AG04450 (cell line): ENCODE measurements at regions of chr21 and their contacts with region 1.

Region 1: GRCh38 chr21:37817242-37817641 is 99.0 kb downstream of the KCNJ6 start:
- DNase-seq: no peak
- H3K4me3 ChIP-seq: no peak overlapping the region
- H3K27ac ChIP-seq: no peak overlapping the region
- H3K27me3 ChIP-seq: no peaks in the 10 kb centered on the region
- CTCF ChIP-seq: no peak

Region 2: DNA sequence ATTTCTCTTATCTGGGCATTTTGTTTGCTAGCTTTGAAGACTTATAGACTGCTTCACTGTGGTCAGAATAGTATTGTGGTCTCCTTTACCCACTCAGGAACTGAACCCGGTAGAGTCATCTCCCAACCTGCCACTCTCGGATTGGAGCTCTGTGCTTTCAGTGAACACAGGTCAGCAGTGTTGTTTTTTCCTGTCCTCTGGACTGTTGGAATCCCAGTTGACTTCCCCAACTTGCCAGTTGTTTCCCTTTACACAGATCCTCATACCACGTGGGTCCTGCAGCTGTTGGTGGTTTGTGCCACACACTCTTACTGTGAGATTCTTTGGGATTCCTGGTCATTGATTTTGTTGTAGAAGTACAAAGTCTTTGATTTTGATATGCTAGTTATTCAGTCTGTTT is 236.6 kb before region 1 on chr21:
- CTCF ChIA-PET with region 1: no interaction called
- POLR2A ChIA-PET with region 1: no interaction called
- DNase-seq: no peak
- H3K4me3 ChIP-seq: no peak overlapping the region
- H3K27ac ChIP-seq: no peak overlapping the region
- H3K27me3 ChIP-seq: peaks cover 2% of the 10 kb centered on the region
- CTCF ChIP-seq: no peak

Region 3: GRCh38 chr21:37799211-37800056 is 17.8 kb before region 1 on chr21:
- CTCF ChIA-PET with region 1: no interaction called
- POLR2A ChIA-PET with region 1: interaction called, 14 read pairs
- DNase-seq: no peak
- H3K4me3 ChIP-seq: no peak overlapping the region
- H3K27ac ChIP-seq: no peak overlapping the region
- H3K27me3 ChIP-seq: no peaks in the 10 kb centered on the region
- CTCF ChIP-seq: no peak

Region 4: DNA sequence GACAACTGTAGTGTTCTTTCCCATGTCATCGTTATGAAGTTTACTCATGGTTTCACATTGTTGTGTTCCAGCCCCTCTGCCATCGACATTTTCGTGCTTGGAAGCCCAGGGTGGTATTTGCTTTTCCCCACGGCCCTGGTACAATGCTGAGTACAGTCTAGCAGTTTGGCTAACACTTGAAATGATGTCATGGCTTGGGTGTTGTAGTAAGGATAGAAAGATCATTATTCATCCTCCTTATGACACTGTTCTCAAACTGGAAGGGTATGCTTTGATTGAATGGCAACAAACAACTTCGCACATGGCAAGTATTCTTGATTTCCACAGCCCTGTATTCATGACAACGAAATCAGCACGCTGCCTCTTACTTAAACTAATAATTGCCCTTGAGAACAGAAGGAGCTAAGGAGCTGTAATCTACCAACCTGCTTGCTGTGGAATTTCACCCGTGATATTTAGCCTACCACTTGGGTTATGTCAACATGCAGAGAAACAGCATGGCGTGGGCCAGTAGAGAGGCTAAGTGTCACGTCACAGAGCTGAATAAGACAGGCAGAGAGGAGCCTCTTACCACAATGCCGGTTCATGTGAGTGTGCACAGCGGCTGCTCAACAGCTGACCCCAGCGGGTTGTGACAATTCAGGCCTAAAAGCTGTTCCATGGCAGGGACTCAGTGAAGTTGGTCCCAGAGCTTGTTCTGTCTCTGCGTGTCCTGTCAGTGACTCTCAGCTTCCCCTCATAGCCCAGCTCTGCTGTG is 25.1 kb after region 1 on chr21:
- CTCF ChIA-PET with region 1: no interaction called
- POLR2A ChIA-PET with region 1: no interaction called
- DNase-seq: no peak
- H3K4me3 ChIP-seq: no peak overlapping the region
- H3K27ac ChIP-seq: no peak overlapping the region
- H3K27me3 ChIP-seq: no peaks in the 10 kb centered on the region
- CTCF ChIP-seq: no peak